Colonic mucosa (tissue), 4 donors: ENCODE measurements at regions of chr20 and their contacts with region 1.

Region 1: GRCh38 chr20:8722276-8722928 is 346.5 kb upstream of the PLCB4 start:
- DNase-seq: peak; percentile 39
- H3K4me3 ChIP-seq: no peak overlapping the region
- H3K27ac ChIP-seq: no peak overlapping the region
- H3K4me1 ChIP-seq: no peaks in the 10 kb centered on the region
- H3K27me3 ChIP-seq: no peaks in the 10 kb centered on the region
- CTCF ChIP-seq: peak; percentile 64

Region 2: DNA sequence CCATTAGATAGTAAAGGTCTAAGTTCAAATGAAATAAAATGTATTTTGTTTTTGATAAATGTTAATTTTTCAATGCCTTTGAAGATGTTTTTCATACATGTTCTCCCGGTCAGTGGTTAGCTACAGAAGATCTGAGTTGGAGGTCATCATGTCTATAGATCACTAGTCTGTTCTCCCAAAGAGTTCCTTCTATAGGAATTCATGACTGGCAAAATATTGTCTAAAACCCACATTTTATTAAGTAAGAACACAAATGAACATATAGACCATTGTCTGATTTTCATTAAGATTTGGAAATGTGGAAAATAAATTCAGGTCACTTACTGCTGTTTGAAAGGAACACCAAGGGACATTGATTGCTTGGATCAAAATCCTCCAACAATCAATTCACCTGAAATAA is 805.8 kb before region 1 on chr20:
- intact Hi-C with region 1: no loop called
- DNase-seq: no peak
- H3K4me3 ChIP-seq: no peak overlapping the region
- H3K27ac ChIP-seq: no peak overlapping the region
- H3K4me1 ChIP-seq: no peaks in the 10 kb centered on the region
- H3K27me3 ChIP-seq: no peaks in the 10 kb centered on the region
- CTCF ChIP-seq: no peak

Region 3: DNA sequence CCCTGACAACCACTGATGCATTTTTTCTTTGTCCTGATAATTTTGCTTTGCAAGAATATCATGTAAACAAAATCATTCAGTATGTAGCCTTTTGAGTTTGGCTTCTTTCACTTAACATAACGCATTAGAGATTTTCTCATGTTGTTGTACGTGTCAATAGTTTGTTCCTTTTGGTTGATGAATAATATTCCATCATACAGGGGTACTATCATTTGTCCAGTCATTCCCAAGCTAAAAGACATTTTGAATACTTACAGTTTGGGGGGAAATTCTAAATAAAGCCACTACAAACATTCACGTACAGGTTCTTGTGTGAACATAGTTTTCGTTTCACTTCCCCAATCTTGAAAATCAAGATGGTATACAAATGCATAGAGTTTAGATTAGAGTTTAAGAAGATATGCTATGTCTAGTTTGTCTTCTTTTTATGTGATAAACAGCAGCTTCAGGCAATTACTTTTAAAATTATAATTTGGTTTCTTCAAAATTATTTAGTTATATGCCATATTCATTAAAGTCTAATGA is 787.3 kb before region 1 on chr20:
- intact Hi-C with region 1: loop called (anchors 10 kb)
- DNase-seq: no peak
- H3K4me3 ChIP-seq: no peak overlapping the region
- H3K27ac ChIP-seq: no peak overlapping the region
- H3K4me1 ChIP-seq: no peaks in the 10 kb centered on the region
- H3K27me3 ChIP-seq: no peaks in the 10 kb centered on the region
- CTCF ChIP-seq: no peak

Region 4: GRCh38 chr20:8043687-8044282 is 678.6 kb before region 1 on chr20:
- intact Hi-C with region 1: loop called (anchors 5 kb)
- DNase-seq: peak; percentile 28
- H3K4me3 ChIP-seq: no peak overlapping the region
- H3K27ac ChIP-seq: no peak overlapping the region
- H3K4me1 ChIP-seq: no peaks in the 10 kb centered on the region
- H3K27me3 ChIP-seq: no peaks in the 10 kb centered on the region
- CTCF ChIP-seq: peak; percentile 75

Region 5: DNA sequence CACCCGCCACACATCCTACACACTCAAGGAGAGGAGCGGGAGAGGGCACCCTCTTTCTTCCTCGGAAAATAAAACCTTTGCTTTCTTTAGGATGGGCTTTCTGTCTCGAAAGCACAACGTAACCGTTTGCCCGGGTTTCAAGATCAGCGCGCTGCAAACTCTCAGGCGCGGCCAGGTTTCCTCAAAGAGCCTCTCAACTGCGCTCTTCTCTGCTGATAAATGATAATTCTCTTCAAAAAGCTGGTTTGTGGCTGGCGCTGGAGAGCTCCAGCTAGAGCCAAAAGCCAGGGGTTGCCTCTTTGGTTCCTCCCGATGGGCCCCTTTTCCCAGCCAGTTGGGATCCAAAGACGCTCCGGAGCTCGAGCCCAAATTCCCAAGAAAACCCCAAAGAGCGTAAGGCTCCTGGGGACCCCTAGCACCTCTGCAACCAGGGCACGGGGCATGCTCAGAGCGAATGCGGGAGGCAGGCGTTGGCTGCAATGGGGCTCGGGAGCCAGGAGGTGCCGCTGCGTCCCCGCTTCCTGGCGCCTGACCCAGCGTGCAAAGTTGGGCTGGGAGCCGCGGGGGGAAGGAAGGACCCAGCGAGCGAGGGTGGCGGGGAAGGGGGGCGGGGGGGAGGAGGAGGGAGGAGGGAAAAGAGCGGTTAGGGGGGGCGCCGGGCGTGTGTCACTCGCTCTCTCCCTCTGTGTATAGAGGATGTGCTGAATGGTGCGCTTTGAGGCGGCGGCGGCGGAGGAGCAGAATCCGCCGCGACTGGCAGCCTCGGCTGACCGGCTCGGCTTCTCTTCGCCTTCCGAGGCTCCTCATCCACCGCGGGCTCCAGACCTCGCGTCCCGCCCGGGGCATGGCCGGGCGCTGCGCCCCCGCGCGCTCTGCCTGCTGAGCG is 590.6 kb before region 1 on chr20 and contains the start of gene PLCB1:
- intact Hi-C with region 1: loop called (anchors 5 kb)
- DNase-seq: peak; percentile 71
- H3K4me3 ChIP-seq: peak within 1 kb of the TSS; percentile 48
- H3K27ac ChIP-seq: peak within 1 kb of the TSS; percentile 47
- H3K4me1 ChIP-seq: no peaks in the 10 kb centered on the region
- H3K27me3 ChIP-seq: no peaks in the 10 kb centered on the region
- CTCF ChIP-seq: peak; percentile 61
- total RNA-seq, gene PLCB1: 8.3 to 9.6 TPM

Region 6: GRCh38 chr20:8389381-8390036 is 332.9 kb before region 1 on chr20:
- intact Hi-C with region 1: loop called (anchors 10 kb)
- DNase-seq: no peak
- H3K4me3 ChIP-seq: no peak overlapping the region
- H3K27ac ChIP-seq: no peak overlapping the region
- H3K4me1 ChIP-seq: no peaks in the 10 kb centered on the region
- H3K27me3 ChIP-seq: no peaks in the 10 kb centered on the region
- CTCF ChIP-seq: peak; percentile 35